ENCODE measurements at regions of chr15 and their contacts with region 1.

Region 1: GRCh38 chr15:62896978-62897647 is 145.4 kb upstream of the TPM1 start:
- DNase-seq: peak; percentile 99
- H3K4me3 ChIP-seq: no peak overlapping the region
- H3K27ac ChIP-seq: peak overlapping the region; percentile 100
- H3K4me1 ChIP-seq: peaks cover 42% of the 10 kb centered on the region
- H3K27me3 ChIP-seq: no peaks in the 10 kb centered on the region
- CTCF ChIP-seq: no peak
- POLR2A ChIP-seq: peak; percentile 78

Region 2: DNA sequence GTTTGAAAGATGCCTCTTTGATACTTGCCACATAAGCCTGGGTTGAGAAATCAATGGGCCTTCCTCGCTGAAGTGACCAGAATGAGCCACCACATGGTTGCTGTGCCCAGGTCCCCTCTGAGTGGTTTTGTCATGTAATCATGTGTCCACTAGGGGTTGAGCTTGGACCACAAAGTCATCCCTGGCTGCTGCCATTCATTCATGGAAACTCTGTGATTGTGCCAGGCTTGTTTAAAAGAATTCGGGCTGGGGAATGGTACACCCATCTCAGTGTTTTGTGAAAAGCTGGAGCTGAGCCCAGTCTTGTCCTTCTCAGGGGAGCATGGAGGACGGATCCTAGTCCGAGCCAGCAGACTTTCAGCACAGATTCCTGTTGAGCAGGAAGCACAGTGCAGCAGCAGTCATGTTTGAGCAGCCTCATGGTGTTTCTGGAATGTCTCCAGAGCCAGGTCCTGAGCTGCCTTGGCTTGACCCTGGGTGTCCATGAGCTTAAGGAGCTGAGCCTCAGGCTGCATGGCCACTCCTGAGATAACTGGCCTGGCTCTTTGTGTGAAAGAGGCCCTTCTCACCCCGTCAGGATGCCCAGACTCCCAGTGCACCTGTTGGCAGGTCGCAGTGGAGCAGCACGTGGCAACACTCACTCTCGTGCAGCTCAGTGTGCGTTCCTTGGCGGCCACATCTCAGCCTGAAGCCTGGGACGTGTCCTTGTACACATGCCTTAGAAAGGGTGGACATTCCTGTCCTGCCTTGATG is 114.9 kb before region 1 on chr15:
- CTCF ChIA-PET with region 1: no interaction called
- POLR2A ChIA-PET with region 1: interaction called, 3 read pairs
- dilution Hi-C with region 1: no loop called
- intact Hi-C with region 1: loop called (anchors 1 kb)
- DNase-seq: peak; percentile 90
- H3K4me3 ChIP-seq: no peak overlapping the region
- H3K27ac ChIP-seq: no peak overlapping the region
- H3K4me1 ChIP-seq: peaks cover 8% of the 10 kb centered on the region
- H3K27me3 ChIP-seq: no peaks in the 10 kb centered on the region
- CTCF ChIP-seq: peak; percentile 73 to 77
- POLR2A ChIP-seq: no peak

Region 3: GRCh38 chr15:62858343-62858742 is 38.8 kb before region 1 on chr15:
- CTCF ChIA-PET with region 1: no interaction called
- POLR2A ChIA-PET with region 1: no interaction called
- dilution Hi-C with region 1: no loop called
- intact Hi-C with region 1: loop called (anchors 2 kb)
- DNase-seq: peak; percentile 70
- H3K4me3 ChIP-seq: no peak overlapping the region
- H3K27ac ChIP-seq: peak overlapping the region; percentile 8
- H3K4me1 ChIP-seq: peaks cover 13% of the 10 kb centered on the region
- H3K27me3 ChIP-seq: no peaks in the 10 kb centered on the region
- CTCF ChIP-seq: no peak
- POLR2A ChIP-seq: no peak

Region 4: GRCh38 chr15:62958528-62959363 is 61.6 kb after region 1 on chr15:
- CTCF ChIA-PET with region 1: interaction called, 4 read pairs
- POLR2A ChIA-PET with region 1: no interaction called
- dilution Hi-C with region 1: no loop called
- intact Hi-C with region 1: loop called (anchors 1 kb)
- DNase-seq: no peak
- H3K4me3 ChIP-seq: no peak overlapping the region
- H3K27ac ChIP-seq: no peak overlapping the region
- H3K4me1 ChIP-seq: peaks cover 18% of the 10 kb centered on the region
- H3K27me3 ChIP-seq: no peaks in the 10 kb centered on the region
- CTCF ChIP-seq: no peak
- POLR2A ChIP-seq: no peak

Region 5: GRCh38 chr15:63048115-63048775 is 151.1 kb after region 1 on chr15:
- CTCF ChIA-PET with region 1: interaction called, 29 read pairs
- POLR2A ChIA-PET with region 1: interaction called, 70 read pairs
- dilution Hi-C with region 1: no loop called
- intact Hi-C with region 1: loop called (anchors 1 kb)
- DNase-seq: peak; percentile 94
- H3K4me3 ChIP-seq: peak overlapping the region; percentile 72 to 87 (median 78)
- H3K27ac ChIP-seq: peak overlapping the region; percentile 68
- H3K4me1 ChIP-seq: peaks cover 81% of the 10 kb centered on the region
- H3K27me3 ChIP-seq: no peaks in the 10 kb centered on the region
- CTCF ChIP-seq: peak; percentile 92 to 95
- POLR2A ChIP-seq: peak; percentile 66

Region 6: GRCh38 chr15:63135804-63136203 is 238.7 kb after region 1 on chr15:
- CTCF ChIA-PET with region 1: no interaction called
- POLR2A ChIA-PET with region 1: no interaction called
- dilution Hi-C with region 1: no loop called
- intact Hi-C with region 1: loop called (anchors 2 kb)
- DNase-seq: peak; percentile 94
- H3K4me3 ChIP-seq: no peak overlapping the region
- H3K27ac ChIP-seq: peak overlapping the region; percentile 96
- H3K4me1 ChIP-seq: peaks cover 36% of the 10 kb centered on the region
- H3K27me3 ChIP-seq: no peaks in the 10 kb centered on the region
- CTCF ChIP-seq: no peak
- POLR2A ChIP-seq: peak; percentile 78

Region 7: DNA sequence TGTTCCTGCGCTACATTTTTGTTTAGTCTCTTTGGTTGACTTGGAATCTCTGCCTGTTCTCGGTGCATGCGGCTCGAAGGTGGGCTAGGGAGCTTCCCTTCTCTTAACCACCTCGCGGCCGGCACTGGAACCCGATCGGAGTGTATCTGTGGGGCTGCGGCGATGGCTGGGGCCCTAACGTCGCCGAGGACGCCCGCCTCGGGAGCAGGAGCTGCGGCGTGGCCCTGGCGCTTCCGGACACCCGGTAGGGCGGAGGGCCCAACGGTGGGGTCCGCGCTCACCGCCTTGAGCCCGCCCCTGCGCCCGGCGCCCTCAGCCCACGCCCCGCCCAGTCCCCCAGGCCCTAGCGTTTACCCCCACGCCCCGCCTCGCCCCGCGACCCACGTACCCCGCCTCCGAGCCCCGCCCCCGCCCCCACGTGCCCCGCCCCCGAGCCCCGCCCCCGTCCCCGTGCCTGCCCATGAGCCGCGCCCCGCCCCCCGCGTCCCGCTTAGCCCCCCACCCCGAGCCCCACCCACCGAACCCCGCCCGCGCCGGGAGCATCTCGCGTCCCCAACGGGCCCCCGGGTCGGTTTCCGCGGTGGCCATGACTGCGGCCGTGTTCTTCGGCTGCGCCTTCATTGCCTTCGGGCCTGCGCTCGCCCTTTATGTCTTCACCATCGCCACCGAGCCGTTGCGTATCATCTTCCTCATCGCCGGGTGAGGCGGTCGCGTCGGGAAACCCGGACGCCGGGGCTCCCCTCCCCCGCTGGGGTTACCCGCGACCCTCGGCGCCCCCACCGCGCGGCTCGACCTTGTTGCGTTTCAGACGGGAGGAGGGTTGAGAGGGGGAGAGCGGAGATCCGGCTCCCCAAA is 380.2 kb after region 1 on chr15 and contains the start of gene APH1B:
- CTCF ChIA-PET with region 1: no interaction called
- POLR2A ChIA-PET with region 1: no interaction called
- dilution Hi-C with region 1: no loop called
- intact Hi-C with region 1: no loop called
- DNase-seq: peak; percentile 75
- H3K4me3 ChIP-seq: peak within 1 kb of the TSS; percentile 68 to 85 (median 73)
- H3K27ac ChIP-seq: peak within 1 kb of the TSS; percentile 33
- H3K4me1 ChIP-seq: peaks cover 9% of the 10 kb centered on the region
- H3K27me3 ChIP-seq: no peaks in the 10 kb centered on the region
- CTCF ChIP-seq: no peak
- POLR2A ChIP-seq: peak; percentile 83
- total RNA-seq, gene APH1B: 24.6 and 28.8 TPM in 2 replicates

Measured in endothelial cell of umbilical vein (primary cell).